ENCODE measurements at regions of chr5 and their contacts with region 1.

Region 1: DNA sequence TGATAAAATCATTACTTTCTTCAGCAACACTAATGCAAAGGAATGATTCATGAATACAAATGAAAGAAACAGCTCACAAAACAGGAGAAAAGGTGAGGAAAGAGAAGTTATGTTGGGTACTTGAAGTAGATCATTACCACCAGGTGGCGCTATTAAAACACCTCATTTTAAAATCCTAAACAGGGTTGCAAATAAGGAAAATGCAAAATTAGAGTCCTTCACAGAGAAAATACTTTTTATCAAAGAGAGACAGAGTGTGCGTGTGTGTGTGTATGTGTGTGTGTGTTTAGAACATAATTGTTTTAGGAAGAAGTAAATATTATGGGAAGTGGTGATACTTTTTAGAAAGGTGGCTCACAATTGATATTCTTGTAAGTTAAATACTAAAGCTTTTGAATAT is 49.5 kb upstream of the CD180 start:
- DNase-seq: no peak
- H3K4me3 ChIP-seq: no peak overlapping the region
- CTCF ChIP-seq: no peak
- POLR2A ChIP-seq: no peak

Region 2: DNA sequence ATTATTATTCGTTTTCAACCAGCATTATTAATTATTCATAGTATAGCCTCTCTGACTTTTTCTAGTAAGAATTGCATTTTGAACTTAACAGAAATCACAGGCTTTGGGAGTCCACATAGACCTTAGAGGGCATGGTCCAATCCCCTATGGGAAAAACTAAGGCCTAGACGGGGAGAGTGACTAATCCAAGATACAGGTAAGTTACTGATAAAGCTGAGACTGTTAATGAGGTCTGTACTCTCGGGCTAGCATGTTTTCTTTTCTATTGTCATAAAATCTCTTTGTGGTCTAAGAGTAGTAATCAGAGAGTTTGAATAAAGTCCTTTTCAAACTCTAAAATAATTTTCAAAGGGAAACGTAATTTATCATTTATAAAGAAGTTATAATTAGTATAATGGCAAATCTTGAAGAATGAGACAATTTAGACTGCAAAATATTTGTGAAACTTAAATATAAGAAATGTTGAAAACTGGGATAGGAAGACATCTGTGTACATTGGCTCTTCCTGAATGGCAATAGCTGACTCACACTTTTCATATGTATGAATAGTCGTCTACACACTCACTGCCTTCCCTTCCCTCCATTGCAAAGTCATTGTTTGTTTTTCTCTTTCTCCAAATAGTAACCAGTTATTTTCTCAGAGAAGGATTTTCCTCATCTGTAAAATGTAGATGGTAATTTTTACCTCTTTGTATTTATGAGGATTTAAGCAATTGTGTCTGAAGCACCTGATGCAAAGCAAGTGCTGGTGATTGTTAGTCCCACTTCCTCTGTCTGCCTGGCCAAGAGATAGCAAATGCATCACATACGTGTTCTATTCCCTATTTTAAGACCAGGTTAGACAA is 158.4 kb after region 1 on chr5:
- intact Hi-C with region 1: no loop called
- DNase-seq: no peak
- H3K4me3 ChIP-seq: no peak overlapping the region
- CTCF ChIP-seq: no peak
- POLR2A ChIP-seq: no peak

Region 3: GRCh38 chr5:67561151-67561932 is 315.2 kb after region 1 on chr5:
- intact Hi-C with region 1: no loop called
- DNase-seq: no peak
- H3K4me3 ChIP-seq: no peak overlapping the region
- CTCF ChIP-seq: no peak
- POLR2A ChIP-seq: no peak

Region 4: GRCh38 chr5:67699560-67699959 is 453.5 kb after region 1 on chr5:
- intact Hi-C with region 1: no loop called
- DNase-seq: no peak
- H3K4me3 ChIP-seq: no peak overlapping the region
- CTCF ChIP-seq: no peak
- POLR2A ChIP-seq: no peak

Region 5: DNA sequence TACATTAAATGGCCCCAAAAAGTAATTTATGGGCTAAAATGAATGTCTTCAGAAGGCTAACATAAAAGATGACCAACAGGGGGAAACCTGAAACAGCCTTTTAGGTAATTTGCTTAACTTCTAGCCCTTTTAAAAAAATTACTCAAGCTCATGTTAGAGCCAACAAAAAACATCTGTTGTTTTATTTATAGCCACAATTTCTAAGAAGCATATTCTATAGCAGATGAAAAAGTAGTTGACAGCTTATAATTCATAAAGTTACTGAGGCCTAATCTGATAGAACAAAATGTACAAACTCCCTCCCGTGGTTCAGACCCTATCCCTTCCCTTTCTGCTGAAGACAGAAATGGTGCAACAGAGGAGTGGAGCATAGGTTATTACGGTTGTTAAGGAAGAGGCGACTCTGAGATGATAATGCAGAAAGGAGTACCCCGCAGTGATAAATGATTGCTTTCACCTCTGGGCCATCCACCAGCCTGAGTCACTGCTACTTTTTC is 1015.5 kb after region 1 on chr5:
- intact Hi-C with region 1: loop called (anchors 10 kb)
- DNase-seq: no peak
- H3K4me3 ChIP-seq: no peak overlapping the region
- CTCF ChIP-seq: no peak
- POLR2A ChIP-seq: no peak

Measured in lower leg skin (tissue), 4 donors.